Mucosa of descending colon (tissue), 3 donors: ENCODE measurements at regions of chr17 and their contacts with region 1.

Region 1: DNA sequence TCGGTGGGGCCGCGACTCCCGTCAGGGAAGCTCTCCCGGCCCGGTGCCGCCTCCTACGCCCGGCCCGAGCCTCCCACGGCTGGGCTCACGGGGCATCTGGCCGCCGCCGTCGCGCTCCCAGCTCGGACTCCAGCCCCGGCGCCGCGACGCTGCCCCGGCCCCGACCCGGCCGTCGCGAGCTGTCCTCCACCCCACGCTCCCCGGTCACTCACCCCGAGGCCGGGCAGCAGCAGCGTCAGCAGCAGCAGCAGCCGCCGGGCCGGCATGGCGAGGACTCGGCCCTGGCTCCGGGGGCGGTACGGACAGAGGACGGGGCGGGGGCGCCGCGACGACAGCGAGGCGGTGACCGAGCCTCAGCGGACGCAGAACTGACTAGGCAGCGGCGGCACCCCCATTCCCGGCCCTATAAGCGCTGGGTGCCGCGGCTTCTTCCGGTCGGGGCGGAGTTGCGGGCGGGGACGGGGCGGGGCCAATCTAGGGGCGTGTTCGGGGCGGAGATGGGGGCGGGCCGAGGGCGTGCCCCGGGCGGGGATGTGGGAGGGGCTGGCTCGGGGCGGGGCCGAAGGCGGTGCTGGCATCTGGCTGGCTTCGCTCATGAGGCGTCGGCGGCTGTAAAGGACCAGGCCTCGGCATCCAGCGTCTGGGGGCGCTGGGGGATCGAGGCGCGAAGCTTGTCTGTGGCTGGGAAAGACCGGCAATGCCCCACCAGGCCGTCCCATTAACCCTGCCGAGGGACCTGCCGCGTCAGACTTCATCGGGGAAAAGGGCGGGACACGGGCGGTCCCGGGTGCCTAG is at the start of gene ERN1:
- DNase-seq: peak; percentile 94 to 96 (median 95)
- ATAC-seq: peak; percentile 95
- H3K4me3 ChIP-seq: peak within 1 kb of the TSS; percentile 80
- H3K4me1 ChIP-seq: peaks cover 17% of the 10 kb centered on the region
- CTCF ChIP-seq: no peak
- total RNA-seq, gene ERN1: 18.4 to 27.1 (median 21.7) TPM

Region 2: DNA sequence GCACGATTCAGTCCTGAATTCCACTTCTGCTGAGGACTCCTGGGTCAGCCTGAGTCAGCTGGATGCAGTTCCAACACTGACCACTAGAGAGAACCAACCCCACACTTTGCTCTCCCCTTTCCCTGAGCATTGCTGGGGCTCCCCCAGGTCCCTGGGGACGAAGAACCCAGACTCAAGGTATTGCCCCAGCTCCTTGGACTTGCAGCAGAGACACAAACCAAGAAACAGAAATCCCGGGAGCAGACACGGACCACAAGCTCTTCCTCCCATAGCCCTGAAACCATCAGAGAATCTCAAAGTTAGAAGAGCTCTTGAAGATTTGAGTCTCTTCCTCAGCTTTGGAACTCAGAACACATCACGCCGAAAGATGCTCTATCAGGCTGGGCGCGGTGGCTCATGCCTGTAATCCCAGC is 210.6 kb before region 1 on chr17:
- intact Hi-C with region 1: loop called in 1 of 2 experiments (anchors 10 kb)
- DNase-seq: peak in 2 of 3 donors; percentile 54 to 81
- ATAC-seq: peak; percentile 88
- H3K4me3 ChIP-seq: no peak overlapping the region
- H3K4me1 ChIP-seq: no peaks in the 10 kb centered on the region
- CTCF ChIP-seq: peak; percentile 96

Region 3: GRCh38 chr17:64025732-64026294 is 104.1 kb before region 1 on chr17:
- intact Hi-C with region 1: loop called (anchors 2 to 5 kb)
- DNase-seq: peak; percentile 79 to 93 (median 86)
- ATAC-seq: peak; percentile 94
- H3K4me3 ChIP-seq: no peak overlapping the region
- H3K4me1 ChIP-seq: peaks cover 6% of the 10 kb centered on the region
- CTCF ChIP-seq: peak; percentile 83

Region 4: GRCh38 chr17:64063766-64064224 is 66.2 kb before region 1 on chr17:
- intact Hi-C with region 1: loop called in 1 of 2 experiments (anchors 10 kb)
- DNase-seq: peak; percentile 81 to 84 (median 83)
- ATAC-seq: peak; percentile 85
- H3K4me3 ChIP-seq: no peak overlapping the region
- H3K4me1 ChIP-seq: no peaks in the 10 kb centered on the region
- CTCF ChIP-seq: peak; percentile 37